ENCODE measurements at regions of chr5 and their contacts with region 1.

Region 1: GRCh38 chr5:35926389-35927051 is 11.9 kb downstream of the CAPSL start:
- DNase-seq: peak in 1 of 2 donors; percentile 46
- H3K4me3 ChIP-seq: no peak overlapping the region
- CTCF ChIP-seq: peak in 1 of 3 donors; percentile 26
- POLR2A ChIP-seq: no peak

Region 2: GRCh38 chr5:35651002-35651756 is 275.3 kb before region 1 on chr5:
- intact Hi-C with region 1: loop called (anchors 10 kb)
- DNase-seq: no peak
- H3K4me3 ChIP-seq: no peak overlapping the region
- CTCF ChIP-seq: no peak
- POLR2A ChIP-seq: no peak

Region 3: DNA sequence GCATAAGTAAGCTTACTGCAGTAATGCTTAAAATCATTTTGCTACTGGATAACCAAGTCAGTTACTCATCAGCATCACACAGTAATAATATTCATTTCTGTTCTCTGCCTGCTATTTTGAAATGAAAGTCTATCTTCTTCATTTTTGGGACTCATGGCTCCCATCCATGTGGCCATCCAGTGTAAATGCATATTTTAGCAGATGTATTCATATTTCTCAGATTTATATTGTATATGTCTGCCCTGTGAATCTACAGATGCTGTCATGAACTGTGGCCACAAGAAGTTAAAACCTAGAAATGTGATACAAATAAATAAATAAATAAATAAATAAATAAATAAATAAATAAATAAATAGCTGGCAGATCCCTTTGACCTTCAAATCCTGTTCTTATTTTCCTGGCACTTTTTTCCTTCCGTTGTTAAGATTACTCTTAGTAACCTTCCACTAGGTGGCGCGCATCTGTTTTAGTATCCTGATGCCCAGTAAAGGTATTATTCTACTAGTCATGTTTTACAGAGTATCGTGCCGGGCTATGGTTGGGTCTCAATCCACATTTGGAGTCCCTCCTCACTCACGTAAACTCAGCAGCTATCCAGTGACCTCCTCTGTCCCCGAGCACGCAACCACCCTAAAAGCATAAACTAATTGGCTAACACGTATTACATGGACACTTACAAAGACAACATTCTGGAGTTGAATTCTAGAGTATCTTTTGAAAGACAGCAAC is 149.0 kb before region 1 on chr5:
- intact Hi-C with region 1: loop called (anchors 5 kb)
- DNase-seq: peak; percentile 65 to 87
- H3K4me3 ChIP-seq: no peak overlapping the region
- CTCF ChIP-seq: no peak
- POLR2A ChIP-seq: no peak

Region 4: GRCh38 chr5:36079200-36079761 is 152.8 kb after region 1 on chr5:
- intact Hi-C with region 1: no loop called
- DNase-seq: no peak
- H3K4me3 ChIP-seq: no peak overlapping the region
- CTCF ChIP-seq: no peak
- POLR2A ChIP-seq: no peak

Measured in lower leg skin (tissue), 4 donors.